Endothelial cell of umbilical vein (primary cell): ENCODE measurements at regions of chr3 and their contacts with region 1.

Region 1: GRCh38 chr3:185659942-185660921 is 74.1 kb downstream of the SENP2 start:
- DNase-seq: peak; percentile 84
- H3K4me3 ChIP-seq: no peak overlapping the region
- H3K27ac ChIP-seq: peak overlapping the region; percentile 48
- H3K4me1 ChIP-seq: peaks cover 55% of the 10 kb centered on the region
- H3K27me3 ChIP-seq: no peaks in the 10 kb centered on the region
- CTCF ChIP-seq: peak; percentile 98 to 99
- POLR2A ChIP-seq: no peak

Region 2: GRCh38 chr3:185677146-185677829 is 17.1 kb after region 1 on chr3:
- CTCF ChIA-PET with region 1: interaction called, 49 read pairs
- POLR2A ChIA-PET with region 1: no interaction called
- dilution Hi-C with region 1: no loop called
- intact Hi-C with region 1: no loop called
- DNase-seq: peak; percentile 81
- H3K4me3 ChIP-seq: no peak overlapping the region
- H3K27ac ChIP-seq: peak overlapping the region; percentile 36
- H3K4me1 ChIP-seq: peaks cover 7% of the 10 kb centered on the region
- H3K27me3 ChIP-seq: no peaks in the 10 kb centered on the region
- CTCF ChIP-seq: peak; percentile 67 to 70
- POLR2A ChIP-seq: no peak

Region 3: GRCh38 chr3:185717121-185717520 is 56.9 kb after region 1 on chr3:
- CTCF ChIA-PET with region 1: interaction called, 13 read pairs
- POLR2A ChIA-PET with region 1: no interaction called
- dilution Hi-C with region 1: no loop called
- intact Hi-C with region 1: no loop called
- DNase-seq: peak; percentile 39
- H3K4me3 ChIP-seq: no peak overlapping the region
- H3K27ac ChIP-seq: peak overlapping the region; percentile 27
- H3K4me1 ChIP-seq: peaks cover 33% of the 10 kb centered on the region
- H3K27me3 ChIP-seq: no peaks in the 10 kb centered on the region
- CTCF ChIP-seq: no peak
- POLR2A ChIP-seq: no peak

Region 4: DNA sequence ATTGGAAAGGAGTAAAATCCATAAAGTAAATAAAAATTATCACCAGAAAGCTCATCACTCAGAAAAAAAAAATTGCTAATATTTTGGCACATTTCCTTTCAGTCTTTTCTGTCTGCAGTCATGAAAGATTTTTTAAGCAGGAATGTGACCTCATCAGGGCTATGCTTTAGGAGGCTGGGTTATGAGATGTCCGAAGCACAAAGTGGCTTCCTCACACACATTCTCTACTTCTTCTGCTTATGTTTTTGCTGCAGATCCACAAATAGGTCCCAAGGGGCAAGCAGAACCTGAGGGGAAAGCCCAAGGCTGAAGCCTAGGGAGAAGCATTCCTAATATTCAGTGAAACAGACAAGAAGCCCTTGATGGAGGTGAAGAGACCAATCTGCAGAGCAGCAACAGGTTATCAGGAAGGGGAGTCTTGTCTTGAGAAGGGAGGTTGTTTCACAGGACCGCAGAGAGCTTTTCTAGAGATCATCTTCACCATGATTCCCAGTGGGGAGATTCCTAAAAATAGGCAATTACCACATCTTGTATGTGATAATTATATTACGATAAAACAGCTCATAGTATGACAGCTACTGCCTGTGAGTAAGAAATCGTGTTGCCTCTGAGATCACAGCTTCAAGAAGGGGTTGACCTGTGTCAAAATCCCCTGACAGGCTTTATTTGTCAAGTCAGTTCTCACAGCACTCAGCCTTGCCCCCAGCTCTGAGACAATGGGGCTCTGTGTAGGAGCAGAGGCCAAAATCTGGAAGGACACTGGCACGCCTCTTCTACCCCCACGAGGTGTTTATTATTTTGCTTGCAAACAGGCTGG is 104.1 kb after region 1 on chr3:
- CTCF ChIA-PET with region 1: interaction called, 223 read pairs
- POLR2A ChIA-PET with region 1: interaction called, 12 read pairs
- dilution Hi-C with region 1: no loop called
- intact Hi-C with region 1: loop called (anchors 1 kb)
- DNase-seq: peak; percentile 65
- H3K4me3 ChIP-seq: peak overlapping the region in 1 of 3 experiments; percentile 26
- H3K27ac ChIP-seq: peak overlapping the region; percentile 94
- H3K4me1 ChIP-seq: peaks cover 79% of the 10 kb centered on the region
- H3K27me3 ChIP-seq: no peaks in the 10 kb centered on the region
- CTCF ChIP-seq: no peak
- POLR2A ChIP-seq: no peak

Region 5: GRCh38 chr3:185900226-185900625 is 240.0 kb after region 1 on chr3:
- CTCF ChIA-PET with region 1: interaction called, 54 read pairs
- POLR2A ChIA-PET with region 1: interaction called, 4 read pairs
- dilution Hi-C with region 1: no loop called
- intact Hi-C with region 1: loop called (anchors 1 kb)
- DNase-seq: peak; percentile 82
- H3K4me3 ChIP-seq: no peak overlapping the region
- H3K27ac ChIP-seq: no peak overlapping the region
- H3K4me1 ChIP-seq: peaks cover 6% of the 10 kb centered on the region
- H3K27me3 ChIP-seq: no peaks in the 10 kb centered on the region
- CTCF ChIP-seq: no peak
- POLR2A ChIP-seq: no peak

Region 6: GRCh38 chr3:185929192-185930151 is 269.2 kb after region 1 on chr3:
- CTCF ChIA-PET with region 1: interaction called, 20 read pairs
- POLR2A ChIA-PET with region 1: no interaction called
- dilution Hi-C with region 1: no loop called
- intact Hi-C with region 1: loop called (anchors 2 kb)
- DNase-seq: peak; percentile 76
- H3K4me3 ChIP-seq: peak overlapping the region in 1 of 3 experiments; percentile 35
- H3K27ac ChIP-seq: peak overlapping the region; percentile 4
- H3K4me1 ChIP-seq: peaks cover 74% of the 10 kb centered on the region
- H3K27me3 ChIP-seq: no peaks in the 10 kb centered on the region
- CTCF ChIP-seq: no peak
- POLR2A ChIP-seq: peak; percentile 48

Region 7: DNA sequence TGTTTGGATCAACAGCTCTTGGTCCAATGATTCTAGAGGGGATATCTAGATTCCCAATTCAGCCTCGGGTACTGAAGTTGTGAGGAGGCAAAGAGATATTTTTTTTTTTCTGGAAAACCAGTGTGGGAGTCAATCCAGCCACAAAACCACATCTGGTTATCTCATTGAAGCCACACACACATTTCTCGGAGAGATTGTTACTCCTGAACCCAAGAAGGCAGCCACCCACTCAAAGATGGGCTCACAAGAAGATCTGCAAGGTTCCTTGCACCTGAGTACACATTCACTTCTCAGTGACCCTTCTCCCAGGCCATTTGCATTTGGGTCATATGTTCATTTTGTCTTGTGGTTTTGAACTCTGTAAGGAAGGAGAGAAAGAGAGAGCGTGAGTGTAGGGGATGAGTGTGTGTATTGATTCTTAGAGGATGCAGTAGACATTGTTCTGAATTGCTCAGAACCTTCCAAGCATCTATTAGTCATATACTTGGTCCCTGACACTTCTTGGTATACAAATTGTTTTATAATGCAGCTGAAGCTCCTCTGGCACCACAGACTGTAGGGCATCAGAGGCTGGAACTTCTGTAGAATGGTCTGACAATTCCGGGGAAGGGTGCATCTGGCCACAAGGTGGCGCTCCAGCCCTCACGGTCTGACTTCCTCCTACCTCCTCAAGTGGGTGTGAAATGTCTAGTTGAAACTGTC is 316.9 kb after region 1 on chr3:
- CTCF ChIA-PET with region 1: interaction called, 16 read pairs
- POLR2A ChIA-PET with region 1: no interaction called
- dilution Hi-C with region 1: no loop called
- intact Hi-C with region 1: loop called (anchors 1 kb)
- DNase-seq: peak; percentile 75
- H3K4me3 ChIP-seq: no peak overlapping the region
- H3K27ac ChIP-seq: no peak overlapping the region
- H3K4me1 ChIP-seq: peaks cover 6% of the 10 kb centered on the region
- H3K27me3 ChIP-seq: no peaks in the 10 kb centered on the region
- CTCF ChIP-seq: peak; percentile 85 to 93
- POLR2A ChIP-seq: no peak